Activated CD8-positive, alpha-beta memory T cell treated with anti-CD3 and anti-CD28 coated beads, Interleukin-2, amount 10 ng/mL, durations not matched to agents 7 days and 5 days (primary cell): ENCODE measurements at regions of chr17 and their contacts with region 1.

Region 1: DNA sequence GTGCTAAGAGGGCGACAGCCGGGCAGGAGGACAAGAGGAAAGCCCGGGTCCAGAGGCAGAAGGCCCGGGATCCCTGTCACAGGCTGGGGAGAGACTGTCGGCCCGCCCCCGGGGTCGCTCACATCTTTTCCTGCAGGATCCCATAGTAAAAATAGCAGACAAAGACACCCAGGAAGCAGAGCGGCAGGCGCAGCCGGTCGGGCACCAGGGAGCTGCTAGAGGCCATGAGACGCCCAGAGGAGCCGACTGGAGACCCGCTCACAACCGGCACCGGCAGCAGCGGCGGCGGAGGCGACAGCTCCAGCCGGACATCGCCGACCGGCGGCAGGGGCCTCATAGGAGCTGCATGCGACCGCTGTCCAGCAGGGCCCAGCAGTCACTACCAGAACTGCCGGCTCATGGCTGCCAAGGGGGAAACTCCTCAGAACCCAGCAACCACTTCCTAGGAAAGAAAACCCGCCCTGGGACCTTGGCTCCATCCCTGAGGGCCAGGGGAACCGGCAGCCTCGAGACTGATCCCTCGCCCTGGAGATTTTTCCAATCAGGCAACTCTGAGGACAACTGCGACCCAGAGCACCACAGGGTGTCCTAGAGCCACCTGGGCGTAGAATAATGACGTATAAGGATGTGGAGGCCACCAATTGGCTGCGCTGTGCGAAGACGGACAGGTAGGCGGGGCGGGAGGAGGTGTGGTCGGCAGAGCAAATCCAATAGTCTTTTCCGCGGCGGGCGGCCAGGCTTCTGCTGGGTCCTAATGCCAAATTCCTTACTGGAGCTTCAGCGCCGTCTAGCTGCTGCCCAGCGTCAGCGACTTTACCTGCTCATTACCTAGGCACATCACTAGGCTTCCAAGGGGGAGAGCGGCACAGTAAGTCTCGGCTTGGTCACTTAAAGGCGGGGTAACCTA is at the start of gene SLC35B1:
- DNase-seq: peak; percentile 99
- ATAC-seq: peak; percentile 99
- H3K4me3 Mint-ChIP-seq: peak within 1 kb of the TSS; percentile 89
- H3K27ac Mint-ChIP-seq: peak within 1 kb of the TSS; percentile 96
- H3K4me1 Mint-ChIP-seq: peaks cover 45% of the 10 kb centered on the region
- H3K27me3 Mint-ChIP-seq: no peaks in the 10 kb centered on the region
- total RNA-seq, gene SLC35B1: 47.3 to 78.1 TPM

Region 2: DNA sequence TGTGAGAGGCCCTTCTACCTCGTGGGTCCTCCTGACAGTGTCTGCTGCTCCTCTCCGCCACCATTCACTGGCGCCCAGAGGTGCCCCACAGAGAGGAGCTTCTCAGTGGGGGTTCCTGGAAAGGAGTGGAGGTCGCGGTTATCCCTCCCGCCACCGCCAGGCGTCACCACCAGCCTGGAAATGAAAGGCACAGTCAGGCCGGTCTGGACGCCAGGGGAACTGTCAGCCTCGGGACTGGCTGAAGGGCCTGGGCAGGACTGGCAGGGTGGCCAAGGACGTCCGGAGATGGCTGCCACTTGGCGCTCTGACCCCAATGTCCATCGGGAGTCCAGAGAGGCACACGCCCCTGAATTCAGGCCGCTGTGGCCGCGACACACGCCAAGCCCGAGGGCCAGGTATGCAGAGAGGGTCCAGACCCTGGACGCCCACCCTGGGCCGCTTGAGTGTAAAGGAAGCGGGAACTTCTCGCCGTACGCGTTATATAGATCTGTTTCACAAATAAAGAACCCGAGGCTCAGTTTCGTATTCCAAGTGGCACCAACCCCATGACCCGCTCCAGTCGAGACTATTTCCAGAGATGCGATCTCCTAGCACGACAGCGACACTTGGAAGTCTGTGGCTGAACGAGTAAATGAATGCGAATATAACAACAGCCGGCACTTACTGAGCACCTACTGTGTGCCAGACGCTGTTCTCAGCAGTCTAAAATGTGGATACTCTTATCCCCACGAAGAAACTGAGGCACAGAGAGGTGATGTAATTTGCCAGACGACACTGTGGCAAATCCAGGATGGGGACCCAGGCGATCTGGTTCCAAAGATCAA is 139.8 kb before region 1 on chr17:
- CTCF ChIA-PET with region 1: interaction called, 734 read pairs
- DNase-seq: peak; percentile 90
- ATAC-seq: peak; percentile 61
- H3K4me3 Mint-ChIP-seq: peak overlapping the region; percentile 63
- H3K27ac Mint-ChIP-seq: no peak overlapping the region
- H3K4me1 Mint-ChIP-seq: peaks cover 38% of the 10 kb centered on the region
- H3K27me3 Mint-ChIP-seq: peaks cover 51% of the 10 kb centered on the region

Region 3: GRCh38 chr17:49739641-49740271 is 31.9 kb after region 1 on chr17:
- CTCF ChIA-PET with region 1: interaction called, 23 read pairs
- DNase-seq: peak; percentile 95
- ATAC-seq: peak; percentile 93
- H3K4me3 Mint-ChIP-seq: peak overlapping the region; percentile 86
- H3K27ac Mint-ChIP-seq: peak overlapping the region; percentile 100
- H3K4me1 Mint-ChIP-seq: peaks cover 75% of the 10 kb centered on the region
- H3K27me3 Mint-ChIP-seq: no peaks in the 10 kb centered on the region

Region 4: DNA sequence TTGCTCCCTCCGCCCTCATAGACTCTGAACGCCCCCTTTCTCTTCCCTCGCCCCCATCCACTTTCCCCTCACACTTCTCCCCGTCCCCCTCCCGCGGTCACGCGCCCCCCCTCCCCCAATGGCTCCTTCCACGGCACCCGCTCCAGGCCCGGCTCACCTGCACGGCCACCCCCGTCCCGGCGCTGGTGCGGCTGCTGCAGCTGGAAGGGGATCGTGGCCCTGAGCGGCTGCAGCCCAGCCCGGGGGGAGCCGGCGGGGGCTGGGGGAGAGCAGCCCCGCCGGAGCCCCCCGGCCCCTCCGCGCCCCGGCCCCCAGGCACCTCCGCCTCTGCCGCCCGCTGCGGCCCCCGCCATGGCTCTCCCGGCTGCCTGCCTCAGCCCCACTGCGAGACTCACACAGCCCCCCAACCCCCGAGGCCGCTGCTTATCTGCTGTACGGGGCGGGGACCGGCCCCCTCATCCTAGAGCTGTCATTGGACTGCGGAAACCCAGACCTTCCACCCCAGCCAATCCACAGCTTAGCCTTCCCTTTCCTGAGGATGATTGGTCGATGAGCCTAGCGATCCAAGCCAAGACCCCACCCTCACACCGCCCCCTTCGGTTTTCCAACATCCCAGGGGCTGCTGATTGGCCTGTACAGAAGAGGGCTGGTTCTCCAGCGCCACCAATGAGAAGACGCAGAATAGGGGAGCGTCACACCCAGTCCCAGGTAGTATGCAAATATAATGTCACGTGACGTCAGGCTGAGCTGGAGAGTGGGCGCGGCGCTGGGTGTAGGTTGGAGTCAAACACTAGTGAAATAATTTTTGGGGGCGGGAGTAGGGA is 56.1 kb after region 1 on chr17 and contains the start of gene FAM117A:
- CTCF ChIA-PET with region 1: interaction called, 16 read pairs
- DNase-seq: peak; percentile 100
- ATAC-seq: peak; percentile 95
- H3K4me3 Mint-ChIP-seq: peak within 1 kb of the TSS; percentile 94
- H3K27ac Mint-ChIP-seq: peak within 1 kb of the TSS; percentile 90
- H3K4me1 Mint-ChIP-seq: peaks cover 48% of the 10 kb centered on the region
- H3K27me3 Mint-ChIP-seq: peaks cover 26% of the 10 kb centered on the region
- total RNA-seq, gene FAM117A: 31.6 to 44.9 TPM

Region 5: DNA sequence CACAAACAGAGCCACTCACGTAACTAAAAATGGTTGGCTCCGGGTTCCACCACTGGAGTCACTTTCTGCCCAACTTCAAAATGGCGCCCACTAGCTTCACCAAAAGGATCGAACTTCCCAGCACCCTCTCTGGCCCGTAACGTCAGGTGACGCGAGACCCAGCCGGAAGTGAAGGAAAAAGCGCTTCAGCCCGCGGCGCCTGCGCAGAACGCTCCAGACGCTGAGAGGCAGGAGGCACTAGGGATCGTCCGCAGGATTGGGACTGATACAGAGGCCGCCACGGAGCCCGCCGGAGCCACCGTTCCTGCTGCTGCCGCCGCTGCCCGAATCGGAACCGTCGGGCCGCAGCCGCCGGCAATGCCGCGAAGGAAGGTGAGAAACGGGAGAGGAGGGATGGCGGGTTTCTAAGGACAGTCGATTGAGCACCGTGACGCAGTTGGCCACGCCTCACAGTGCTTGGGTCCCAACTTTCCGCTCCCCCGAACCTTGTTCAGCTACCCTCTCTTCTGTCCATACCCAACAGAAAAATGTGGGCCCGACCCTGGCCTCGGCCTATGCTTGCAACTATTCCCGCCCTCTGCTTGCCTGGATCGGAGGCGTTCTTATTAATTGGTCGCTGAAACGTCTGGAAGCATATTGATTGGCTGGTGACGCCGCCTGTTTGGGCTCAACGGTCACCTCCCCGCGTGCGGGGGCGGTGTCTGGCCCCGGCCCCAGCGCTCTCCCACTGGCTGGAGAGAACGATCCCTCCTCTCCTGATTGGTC is 80.8 kb after region 1 on chr17 and contains the start of gene KAT7:
- CTCF ChIA-PET with region 1: interaction called, 31 read pairs
- DNase-seq: peak; percentile 99
- ATAC-seq: peak; percentile 95
- H3K4me3 Mint-ChIP-seq: peak within 1 kb of the TSS; percentile 91
- H3K27ac Mint-ChIP-seq: peak within 1 kb of the TSS; percentile 97
- H3K4me1 Mint-ChIP-seq: peaks cover 53% of the 10 kb centered on the region
- H3K27me3 Mint-ChIP-seq: no peaks in the 10 kb centered on the region
- total RNA-seq, gene KAT7: 76.9 to 80.6 TPM